ENCODE measurements at regions of chr11 and their contacts with region 1.

Region 1: DNA sequence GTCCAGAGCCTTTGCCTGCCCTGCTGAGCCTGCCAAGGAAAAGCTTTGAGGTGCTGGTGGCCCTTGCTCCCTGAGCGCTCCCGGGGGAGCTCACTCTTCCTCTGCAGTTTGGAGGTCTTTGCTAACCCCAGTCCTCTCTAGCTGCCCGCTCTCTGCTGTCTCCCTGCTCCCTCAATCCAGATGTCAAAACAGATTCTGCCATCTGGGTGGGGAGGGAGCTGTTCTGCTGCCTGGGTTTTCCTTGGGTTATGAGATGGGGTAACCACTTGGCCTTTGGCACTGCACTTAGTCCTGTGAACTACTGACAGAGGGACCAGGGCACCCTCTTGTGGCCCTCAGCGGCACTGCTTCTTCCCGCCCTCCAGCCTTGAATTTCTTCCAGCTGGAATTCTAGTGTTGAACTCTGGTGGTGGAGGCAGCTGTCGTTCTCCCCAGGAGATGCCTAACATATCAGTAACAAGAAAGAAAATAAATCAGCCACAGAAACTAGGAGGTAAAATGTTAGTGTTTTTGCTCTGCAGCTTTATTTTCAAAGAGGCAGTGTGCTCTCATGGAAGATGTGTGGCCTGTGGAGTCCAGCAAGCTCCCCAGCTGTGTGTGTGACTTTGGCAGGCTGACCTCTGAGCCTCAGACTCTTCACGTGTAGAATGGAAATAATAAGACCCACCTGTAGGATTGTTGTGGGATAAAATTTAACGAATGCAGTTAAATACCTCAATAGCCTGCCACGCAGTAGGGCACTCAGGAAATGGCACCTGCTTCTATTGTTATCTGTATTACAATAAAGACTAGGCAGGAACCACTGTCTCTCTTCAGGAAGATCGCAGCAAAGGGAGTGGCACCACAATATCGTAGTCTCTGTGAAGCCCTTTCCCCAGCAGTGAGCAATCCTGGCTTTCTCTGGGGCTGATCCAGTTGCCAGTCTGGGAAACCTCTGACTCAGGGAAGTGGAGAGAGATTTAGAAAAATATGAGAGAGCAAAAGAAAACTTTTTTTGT is 23.4 kb downstream of the ARFGAP2 start:
- DNase-seq: peak; percentile 77 to 82 (median 80)
- ATAC-seq: peak; percentile 90
- H3K4me3 ChIP-seq: no peak overlapping the region
- H3K27ac ChIP-seq: no peak overlapping the region
- H3K4me1 ChIP-seq: peaks cover 0 to 5% of the 10 kb centered on the region in 2 experiments; a peak in 2 of 5 replicates
- H3K27me3 ChIP-seq: no peaks in the 10 kb centered on the region
- CTCF ChIP-seq: peak; percentile 92 to 98 (median 98)
- EP300 ChIP-seq: no peak
- POLR2A ChIP-seq: no peak
- RAD21 ChIP-seq: peak; percentile 91 to 98

Region 2: DNA sequence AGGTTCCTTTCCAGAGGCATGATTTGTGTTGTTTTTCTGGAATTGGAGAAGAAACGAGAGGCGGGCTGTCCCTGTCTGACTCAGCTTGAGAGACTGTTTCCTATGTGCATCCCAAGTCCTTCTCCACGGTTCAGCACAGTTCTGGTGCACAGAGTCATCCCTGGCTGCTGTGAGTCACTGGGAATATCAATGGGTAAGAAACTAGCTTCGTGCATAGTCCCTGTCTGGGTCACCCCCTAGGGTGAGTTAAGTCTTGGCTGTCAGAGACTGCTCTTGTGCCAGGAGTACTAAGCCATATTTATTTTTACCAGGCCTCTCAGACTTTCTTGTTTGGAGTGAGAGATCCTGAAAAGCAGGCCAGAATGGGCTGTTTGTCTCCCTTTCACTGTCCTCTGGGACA is 232.5 kb before region 1 on chr11:
- CTCF ChIA-PET with region 1: interaction called, 3 read pairs
- POLR2A ChIA-PET with region 1: interaction called, 3 read pairs
- in situ Hi-C with region 1: no loop called
- intact Hi-C with region 1: loop called (anchors 2 kb)
- DNase-seq: no peak
- ATAC-seq: no peak
- H3K4me3 ChIP-seq: no peak overlapping the region
- H3K27ac ChIP-seq: no peak overlapping the region
- H3K4me1 ChIP-seq: peaks cover 0 to 18% of the 10 kb centered on the region in 2 experiments; a peak in 3 of 5 replicates
- H3K27me3 ChIP-seq: peaks cover 20 to 30% of the 10 kb centered on the region in 2 experiments; a peak in 4 of 5 replicates
- CTCF ChIP-seq: no peak
- EP300 ChIP-seq: no peak
- POLR2A ChIP-seq: no peak
- RAD21 ChIP-seq: no peak

Region 3: GRCh38 chr11:47104261-47104950 is 48.8 kb before region 1 on chr11:
- CTCF ChIA-PET with region 1: interaction called, 3 read pairs
- POLR2A ChIA-PET with region 1: interaction called, 3 read pairs
- in situ Hi-C with region 1: no loop called
- intact Hi-C with region 1: loop called (anchors 5 kb)
- DNase-seq: no peak
- ATAC-seq: no peak
- H3K4me3 ChIP-seq: no peak overlapping the region
- H3K27ac ChIP-seq: no peak overlapping the region
- H3K4me1 ChIP-seq: no peaks in the 10 kb centered on the region
- H3K27me3 ChIP-seq: no peaks in the 10 kb centered on the region; a peak in 1 of 5 replicates
- CTCF ChIP-seq: no peak
- EP300 ChIP-seq: no peak
- POLR2A ChIP-seq: no peak
- RAD21 ChIP-seq: no peak

Measured in K562 (cell line).